ENCODE measurements at regions of chr17 and their contacts with region 1.

Region 1: GRCh38 chr17:43576563-43577229 is 30.6 kb upstream of the ETV4 start:
- DNase-seq: peak; percentile 67 to 69
- ATAC-seq: peak; percentile 61 to 83 (median 77)
- H3K4me3 ChIP-seq: no peak overlapping the region
- H3K27ac ChIP-seq: peak overlapping the region in 4 of 10 donors; percentile 0 to 86 (median 76)
- H3K4me1 ChIP-seq: peaks cover 14 to 55% (median 28%) of the 10 kb centered on the region in 9 donors
- H3K27me3 ChIP-seq: no peaks in the 10 kb centered on the region
- CTCF ChIP-seq: peak; percentile 87 to 99 (median 94)

Region 2: GRCh38 chr17:43517615-43518386 is 58.9 kb before region 1 on chr17:
- intact Hi-C with region 1: loop called in 1 of 10 experiments (anchors 5 kb)
- DNase-seq: no peak
- ATAC-seq: peak in 7 of 8 donors; percentile 48 to 77 (median 52)
- H3K4me3 ChIP-seq: no peak overlapping the region
- H3K27ac ChIP-seq: peak overlapping the region in 8 of 10 donors; percentile 47 to 74 (median 54)
- H3K4me1 ChIP-seq: peaks cover 3 to 37% (median 28%) of the 10 kb centered on the region in 9 donors
- H3K27me3 ChIP-seq: no peaks in the 10 kb centered on the region
- CTCF ChIP-seq: no peak

Region 3: GRCh38 chr17:43673516-43674323 is 97.0 kb after region 1 on chr17:
- intact Hi-C with region 1: loop called in 9 of 10 experiments (anchors 1 to 2 kb)
- DNase-seq: peak; percentile 73 to 81
- ATAC-seq: peak; percentile 53 to 78 (median 66)
- H3K4me3 ChIP-seq: no peak overlapping the region
- H3K27ac ChIP-seq: peak overlapping the region in 2 of 10 donors; percentile 54 to 59
- H3K4me1 ChIP-seq: peaks cover 3 to 43% (median 20%) of the 10 kb centered on the region in 9 donors
- H3K27me3 ChIP-seq: no peaks in the 10 kb centered on the region
- CTCF ChIP-seq: peak; percentile 91 to 99 (median 96)

Region 4: GRCh38 chr17:43760254-43760852 is 183.7 kb after region 1 on chr17:
- intact Hi-C with region 1: loop called in 9 of 10 experiments (anchors 5 to 10 kb)
- DNase-seq: peak; percentile 92 to 95
- ATAC-seq: peak; percentile 85 to 95 (median 92)
- H3K4me3 ChIP-seq: no peak overlapping the region
- H3K27ac ChIP-seq: no peak overlapping the region
- H3K4me1 ChIP-seq: peaks cover 2 to 20% (median 5%) of the 10 kb centered on the region in 9 donors
- H3K27me3 ChIP-seq: peaks cover 0 to 28% (median 25%) of the 10 kb centered on the region in 7 donors
- CTCF ChIP-seq: peak; percentile 97 to 100 (median 99)

Region 5: DNA sequence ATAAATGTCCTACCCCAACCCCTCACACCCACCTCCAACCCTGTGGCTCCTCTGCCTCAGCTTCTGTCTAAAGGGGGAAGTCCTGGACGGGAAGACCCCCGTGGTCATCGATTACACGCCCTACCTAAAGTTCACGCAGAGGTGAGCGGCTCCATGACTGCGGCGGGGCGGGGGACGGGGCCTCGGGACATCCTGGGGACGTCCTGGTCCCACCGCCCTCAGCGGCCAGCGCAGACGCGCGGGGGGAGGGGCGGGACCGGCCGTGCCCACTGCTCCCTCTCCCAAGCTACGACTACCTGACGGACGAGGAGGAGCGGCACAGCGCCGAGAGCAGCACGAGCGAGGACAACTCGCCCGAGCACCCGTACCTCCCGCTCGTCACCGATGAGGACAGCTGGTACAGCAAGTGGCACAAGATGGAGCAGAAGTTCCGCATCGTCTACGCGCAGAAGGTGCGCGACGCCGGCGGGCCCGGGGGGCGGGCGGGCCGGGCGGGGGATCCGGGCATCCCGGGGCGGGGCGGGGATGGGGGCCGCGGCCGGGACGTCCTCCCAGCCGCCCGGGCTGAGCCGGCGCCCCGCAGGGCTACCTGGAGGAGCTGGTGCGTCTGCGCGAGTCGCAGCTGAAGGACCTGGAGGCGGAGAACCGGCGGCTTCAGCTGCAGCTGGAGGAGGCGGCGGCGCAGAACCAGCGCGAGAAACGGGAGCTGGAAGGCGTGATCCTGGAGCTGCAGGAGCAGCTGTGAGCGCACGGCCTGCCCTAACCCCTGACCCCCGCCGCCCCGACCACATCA is 738.4 kb after region 1 on chr17:
- intact Hi-C with region 1: no loop called
- DNase-seq: no peak
- ATAC-seq: no peak
- H3K4me3 ChIP-seq: peak overlapping the region in 8 of 10 donors; percentile 23 to 42 (median 30)
- H3K27ac ChIP-seq: no peak overlapping the region
- H3K4me1 ChIP-seq: peaks cover 4 to 14% (median 6%) of the 10 kb centered on the region in 9 donors
- H3K27me3 ChIP-seq: peaks cover 15 to 61% (median 52%) of the 10 kb centered on the region in 7 donors
- CTCF ChIP-seq: no peak